ENCODE measurements at regions of chr2 and their contacts with region 1.

Region 1: GRCh38 chr2:47323009-47323821 is 79.7 kb upstream of the MSH2 start:
- DNase-seq: no peak
- H3K4me3 ChIP-seq: no peak overlapping the region
- CTCF ChIP-seq: peak; percentile 96

Region 2: DNA sequence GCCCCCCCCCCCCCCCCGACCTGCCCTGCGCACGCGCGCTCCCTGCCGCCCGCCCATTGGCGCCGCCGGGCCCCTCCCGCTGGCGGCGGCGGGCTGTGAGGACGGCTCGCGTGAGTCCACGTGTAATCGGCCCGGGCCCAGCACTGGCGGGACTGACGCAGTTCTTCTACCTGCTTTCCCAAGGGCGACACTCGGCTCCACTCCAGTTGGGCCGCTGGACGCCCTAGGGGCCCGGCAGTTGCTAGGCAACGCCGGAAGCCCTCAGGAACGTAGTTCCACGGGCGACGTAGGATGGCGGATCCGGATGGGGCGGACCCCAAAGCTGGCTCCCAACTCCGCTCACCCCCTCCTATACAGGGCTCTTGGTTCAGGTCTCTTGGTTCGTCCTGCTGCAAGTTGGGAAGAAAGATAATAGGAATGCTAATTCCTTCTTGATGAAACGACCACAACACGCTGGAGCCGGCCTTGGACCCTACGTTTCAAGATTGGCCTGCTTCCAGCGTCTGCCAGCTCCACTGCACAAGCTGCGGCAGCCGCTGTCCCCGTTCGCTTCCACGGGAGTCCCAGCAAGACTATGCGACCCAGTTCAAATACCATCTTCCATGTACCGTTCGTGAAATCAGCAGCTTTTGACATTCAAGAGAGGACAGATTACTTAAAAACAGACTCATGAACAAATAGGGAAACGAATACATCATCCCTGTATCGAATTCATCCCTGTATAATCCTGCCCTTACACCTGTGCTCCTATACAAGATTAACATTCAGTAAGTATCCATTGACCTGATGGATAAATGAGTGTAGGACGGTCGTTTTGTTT is 407.2 kb before region 1 on chr2:
- CTCF ChIA-PET with region 1: interaction called, 56 read pairs
- POLR2A ChIA-PET with region 1: no interaction called
- DNase-seq: peak; percentile 45
- H3K4me3 ChIP-seq: peak overlapping the region; percentile 93
- CTCF ChIP-seq: no peak

Region 3: GRCh38 chr2:47021301-47022009 is 301.8 kb before region 1 on chr2:
- CTCF ChIA-PET with region 1: interaction called, 19 read pairs
- POLR2A ChIA-PET with region 1: interaction called, 3 read pairs
- DNase-seq: no peak
- H3K4me3 ChIP-seq: no peak overlapping the region
- CTCF ChIP-seq: no peak

Region 4: DNA sequence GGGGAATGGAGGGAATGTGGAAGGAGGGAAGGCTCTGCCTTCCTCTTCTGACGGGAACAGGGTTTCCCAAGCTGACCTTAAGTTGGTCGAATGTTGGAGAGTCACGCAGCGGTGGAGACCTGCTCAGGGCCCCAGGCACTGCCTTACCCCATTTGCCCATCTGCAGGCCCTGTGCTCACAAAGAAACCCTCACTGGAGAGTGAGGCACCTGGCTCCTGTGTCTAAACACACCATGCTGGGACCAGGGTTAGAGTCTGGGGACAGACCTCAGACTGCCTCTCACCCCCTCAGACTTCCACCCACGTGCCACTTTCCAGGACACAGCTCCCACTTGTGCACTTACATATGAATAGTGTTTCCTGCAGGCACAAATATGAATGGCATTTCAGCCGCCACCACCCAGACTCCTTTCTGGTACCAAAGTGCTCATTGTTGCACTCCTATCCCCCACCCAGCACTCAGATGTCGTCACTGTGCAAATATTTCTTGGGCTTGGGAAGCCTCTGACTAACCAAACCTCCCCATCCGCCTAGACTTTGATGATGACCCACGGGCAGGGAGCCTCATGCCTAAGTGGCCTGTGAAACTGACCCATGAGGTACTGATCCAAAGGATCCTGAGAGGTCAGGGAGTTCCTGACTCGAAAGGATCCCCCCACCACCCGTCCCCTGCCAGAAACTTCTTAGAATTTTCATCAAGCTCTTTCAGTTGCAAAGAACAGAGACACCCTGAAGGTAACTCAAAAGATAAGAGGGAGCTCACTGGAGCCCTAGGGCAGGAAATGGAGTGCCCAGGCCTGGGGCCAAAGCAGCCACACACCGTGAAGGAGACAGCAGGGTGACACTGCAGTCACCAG is 246.4 kb before region 1 on chr2:
- CTCF ChIA-PET with region 1: interaction called, 23 read pairs
- POLR2A ChIA-PET with region 1: no interaction called
- DNase-seq: peak; percentile 92
- H3K4me3 ChIP-seq: no peak overlapping the region
- CTCF ChIP-seq: no peak

Region 5: DNA sequence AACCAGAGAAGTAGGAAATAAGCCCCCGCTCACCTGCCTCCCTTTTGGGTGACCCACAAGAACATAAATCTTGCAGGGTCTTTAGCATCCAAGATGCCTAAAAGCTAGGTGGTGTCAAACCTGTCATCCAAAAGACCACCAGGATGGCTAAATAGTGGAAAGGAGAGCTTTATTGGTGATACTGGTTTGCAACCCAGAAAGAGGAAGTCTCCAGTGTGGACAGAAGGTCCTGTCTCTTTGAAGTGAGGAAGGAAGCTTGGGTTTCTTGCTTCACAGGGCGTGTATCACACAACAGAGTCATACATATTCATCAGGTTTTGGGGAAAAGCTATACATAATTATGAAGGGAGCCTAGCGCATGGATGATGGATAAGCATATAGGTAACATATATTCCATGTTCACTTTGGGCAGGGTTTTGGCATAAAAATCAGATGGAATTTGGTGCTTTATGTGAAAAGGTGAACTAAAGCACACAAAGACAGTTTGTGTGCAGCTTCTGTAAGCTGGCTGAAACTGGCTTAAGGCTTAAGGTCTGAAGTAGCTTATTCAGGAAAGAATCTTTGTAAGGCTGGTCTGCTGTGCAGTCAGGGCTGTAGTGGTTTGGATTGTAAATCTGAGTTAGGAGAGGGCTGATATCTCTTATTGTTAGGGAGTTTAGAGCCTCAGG is 22.5 kb before region 1 on chr2:
- CTCF ChIA-PET with region 1: interaction called, 19 read pairs
- POLR2A ChIA-PET with region 1: no interaction called
- DNase-seq: no peak
- H3K4me3 ChIP-seq: no peak overlapping the region
- CTCF ChIP-seq: no peak

Region 6: DNA sequence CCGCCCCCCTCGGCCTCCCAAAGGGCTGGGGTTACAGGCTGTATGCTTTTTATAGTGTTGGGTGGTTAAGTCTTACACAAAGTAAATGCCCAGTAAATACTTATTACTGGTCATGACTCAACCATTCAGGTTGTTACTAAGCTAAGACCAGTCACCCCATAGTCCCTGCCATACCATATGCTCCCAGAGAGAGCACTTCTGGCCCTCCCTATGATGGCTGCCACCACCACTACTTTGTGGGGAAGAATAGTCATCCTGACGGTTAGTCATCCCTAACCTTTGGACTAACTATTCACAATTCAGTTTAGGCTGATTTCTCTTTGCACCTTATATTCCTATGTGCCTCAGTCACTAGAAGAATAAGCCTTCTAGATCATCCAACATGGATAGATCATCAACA is 37.7 kb after region 1 on chr2:
- CTCF ChIA-PET with region 1: no interaction called
- POLR2A ChIA-PET with region 1: no interaction called
- DNase-seq: peak; percentile 16
- H3K4me3 ChIP-seq: no peak overlapping the region
- CTCF ChIP-seq: no peak

Region 7: GRCh38 chr2:47512581-47513083 is 189.4 kb after region 1 on chr2:
- CTCF ChIA-PET with region 1: no interaction called
- POLR2A ChIA-PET with region 1: no interaction called
- DNase-seq: no peak
- H3K4me3 ChIP-seq: no peak overlapping the region
- CTCF ChIP-seq: no peak

Measured in AG04449 (cell line).